Activated CD4-positive, alpha-beta memory T cell treated with anti-CD3 and anti-CD28 coated beads, Interleukin-2, amount 10 ng/mL, durations not matched to agents 7 days and 5 days (primary cell): ENCODE measurements at regions of chr22 and their contacts with region 1.

Region 1: GRCh38 chr22:36239401-36240171 is at the start of gene APOL2:
- DNase-seq: peak; percentile 90
- H3K4me3 Mint-ChIP-seq: peak within 1 kb of the TSS; percentile 95
- H3K27ac Mint-ChIP-seq: peak within 1 kb of the TSS; percentile 91
- H3K4me1 Mint-ChIP-seq: peaks cover 45% of the 10 kb centered on the region
- H3K27me3 Mint-ChIP-seq: peaks cover 3% of the 10 kb centered on the region
- total RNA-seq, gene APOL2: 82.3 to 83.0 TPM

Region 2: GRCh38 chr22:36194971-36195370 is 44.6 kb before region 1 on chr22:
- CTCF ChIA-PET with region 1: interaction called, 18 read pairs
- POLR2A ChIA-PET with region 1: interaction called, 3 read pairs
- DNase-seq: peak; percentile 56
- H3K4me3 Mint-ChIP-seq: no peak overlapping the region
- H3K27ac Mint-ChIP-seq: no peak overlapping the region
- H3K4me1 Mint-ChIP-seq: peaks cover 47% of the 10 kb centered on the region
- H3K27me3 Mint-ChIP-seq: peaks cover 1% of the 10 kb centered on the region

Region 3: DNA sequence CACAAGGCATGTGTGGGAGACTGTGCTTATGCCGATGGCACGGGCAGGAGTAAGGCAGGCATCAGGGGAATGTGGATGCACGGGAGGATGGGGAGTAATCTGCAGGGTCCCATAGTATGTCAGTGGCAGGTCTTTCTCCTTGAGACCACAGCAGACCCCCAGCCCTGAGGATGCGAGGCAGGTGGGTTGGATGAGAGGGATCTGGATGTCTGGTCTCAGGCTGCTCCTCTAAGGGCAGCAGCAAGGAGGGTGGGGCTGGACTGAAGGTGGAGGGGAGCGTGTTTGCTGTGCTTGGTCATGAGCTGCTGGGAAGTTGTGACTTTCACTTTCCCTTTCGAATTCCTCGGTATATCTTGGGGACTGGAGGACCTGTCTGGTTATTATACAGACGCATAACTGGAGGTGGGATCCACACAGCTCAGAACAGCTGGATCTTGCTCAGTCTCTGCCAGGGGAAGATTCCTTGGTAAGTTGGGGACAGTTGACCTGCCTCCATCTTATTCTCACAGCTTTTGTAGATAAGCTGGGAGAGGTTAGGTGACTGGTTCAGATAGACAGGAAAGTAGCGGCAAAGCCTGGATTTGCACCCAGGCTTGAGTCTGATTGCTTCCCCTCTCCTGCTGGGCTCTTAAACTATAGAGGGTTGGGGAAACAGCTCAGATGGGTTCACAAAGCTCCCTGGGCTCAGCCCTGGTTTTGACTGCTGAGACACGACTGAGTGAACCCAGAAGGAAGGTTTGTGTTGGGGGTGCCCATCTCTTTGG is 13.3 kb after region 1 on chr22 and contains the start of gene APOL1:
- CTCF ChIA-PET with region 1: interaction called, 65 read pairs
- POLR2A ChIA-PET with region 1: interaction called, 48 read pairs
- DNase-seq: peak; percentile 63
- H3K4me3 Mint-ChIP-seq: peak within 1 kb of the TSS; percentile 93
- H3K27ac Mint-ChIP-seq: peak within 1 kb of the TSS; percentile 89
- H3K4me1 Mint-ChIP-seq: peaks cover 59% of the 10 kb centered on the region
- H3K27me3 Mint-ChIP-seq: no peaks in the 10 kb centered on the region
- total RNA-seq, gene APOL1: 63.0 to 64.0 TPM

Region 4: DNA sequence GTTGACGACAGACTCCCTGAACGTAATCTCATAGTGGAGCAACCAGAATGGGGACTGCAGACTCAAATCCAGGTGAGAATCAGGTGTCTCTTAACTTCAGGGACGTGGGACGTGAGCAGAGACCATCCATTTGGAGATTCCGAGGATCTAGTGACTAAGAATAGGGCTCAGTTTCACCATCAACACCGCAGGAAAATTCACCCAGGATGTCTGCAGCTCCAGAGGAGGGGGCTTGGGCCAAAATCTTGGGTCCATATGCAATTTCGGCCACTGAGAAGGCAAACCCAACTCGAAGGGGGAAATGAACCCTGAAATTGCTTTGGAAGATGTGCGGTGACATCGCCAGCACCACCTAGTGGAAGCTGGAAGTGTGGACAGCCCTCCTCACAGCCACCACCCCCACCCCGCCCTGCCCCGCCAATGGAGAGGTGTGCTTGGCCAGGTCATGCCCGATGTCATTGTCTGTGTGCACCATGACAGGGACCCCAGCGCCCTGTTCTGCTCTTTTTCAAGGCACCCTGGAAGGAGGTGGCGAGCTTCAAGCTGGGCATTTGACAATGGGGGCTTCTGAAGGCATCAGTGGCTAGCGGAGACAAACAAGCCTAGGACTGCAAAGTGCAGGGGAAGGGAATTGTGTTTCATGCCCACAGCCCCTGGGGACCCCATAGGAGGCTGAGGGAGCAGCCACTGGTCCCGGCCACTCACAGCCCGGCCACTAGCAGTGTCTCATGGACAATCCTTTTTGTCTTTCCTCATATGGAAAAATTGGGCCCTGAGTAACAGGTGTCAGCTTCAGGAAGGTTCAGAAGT is 38.1 kb after region 1 on chr22:
- CTCF ChIA-PET with region 1: interaction called, 20 read pairs
- POLR2A ChIA-PET with region 1: interaction called, 5 read pairs
- DNase-seq: peak; percentile 74
- H3K4me3 Mint-ChIP-seq: no peak overlapping the region
- H3K27ac Mint-ChIP-seq: peak overlapping the region; percentile 57
- H3K4me1 Mint-ChIP-seq: peaks cover 30% of the 10 kb centered on the region
- H3K27me3 Mint-ChIP-seq: no peaks in the 10 kb centered on the region